ENCODE measurements at regions of chr21 and their contacts with region 1.

Region 1: GRCh38 chr21:36744560-36745231 is 45.8 kb downstream of the SIM2 start:
- DNase-seq: no peak
- CTCF ChIP-seq: no peak

Region 2: GRCh38 chr21:36734367-36735188 is 10.1 kb before region 1 on chr21:
- CTCF ChIA-PET with region 1: interaction called, 10 read pairs
- POLR2A ChIA-PET with region 1: no interaction called
- DNase-seq: no peak
- CTCF ChIP-seq: no peak

Measured in GM10248 (cell line).